Cardiac septum (tissue), 1 donor: ENCODE measurements at regions of chr6 and their contacts with region 1.

Region 1: DNA sequence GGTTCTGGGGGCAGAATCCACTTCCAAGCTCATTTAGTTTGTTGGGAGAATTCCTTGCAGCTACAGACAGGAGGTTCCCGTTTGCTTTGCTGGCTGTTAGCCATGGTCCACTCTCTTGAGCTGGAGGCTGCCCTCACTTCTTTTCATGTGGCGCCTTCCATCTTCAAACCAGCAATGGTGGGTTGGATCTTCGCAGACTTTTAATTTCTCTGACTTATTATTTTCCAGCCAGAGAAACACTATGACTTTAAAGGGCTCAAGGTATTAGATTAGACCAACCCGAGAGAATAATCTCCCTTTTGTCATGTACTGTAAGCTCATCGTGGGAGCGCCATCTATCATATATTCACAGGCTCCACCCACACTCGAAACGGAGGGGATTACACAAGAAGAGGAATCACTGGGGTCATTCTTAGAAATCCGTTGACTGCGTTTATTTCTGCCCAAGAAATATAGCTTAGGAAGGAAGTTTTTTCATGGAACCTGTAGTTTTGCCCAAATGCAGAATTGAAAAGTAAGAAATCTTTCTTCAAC is 38.9 kb downstream of the SAMD5 start:
- DNase-seq: no peak

Region 2: DNA sequence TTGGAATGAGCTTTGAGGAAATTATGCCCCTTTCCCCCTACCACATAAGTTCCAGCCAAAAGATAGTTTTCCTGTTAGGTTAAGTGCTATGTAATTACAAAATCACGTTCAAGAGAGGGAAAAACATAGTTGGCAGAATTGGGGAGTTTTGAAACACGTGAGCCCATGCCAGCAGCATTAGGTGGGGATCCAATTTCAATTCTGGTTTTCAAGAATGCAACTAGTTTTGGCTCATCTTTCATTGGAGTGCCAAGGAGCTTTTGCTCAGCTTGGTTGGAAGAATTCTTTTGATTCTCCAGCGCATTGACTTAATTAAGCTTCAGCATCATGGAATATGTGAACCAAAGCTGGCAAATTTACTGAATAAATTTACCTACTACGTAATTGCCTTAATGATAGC is 56.9 kb after region 1 on chr6:
- intact Hi-C with region 1: loop called (anchors 5 kb)
- DNase-seq: no peak